ENCODE measurements at regions of chr3 and their contacts with region 1.

Region 1: DNA sequence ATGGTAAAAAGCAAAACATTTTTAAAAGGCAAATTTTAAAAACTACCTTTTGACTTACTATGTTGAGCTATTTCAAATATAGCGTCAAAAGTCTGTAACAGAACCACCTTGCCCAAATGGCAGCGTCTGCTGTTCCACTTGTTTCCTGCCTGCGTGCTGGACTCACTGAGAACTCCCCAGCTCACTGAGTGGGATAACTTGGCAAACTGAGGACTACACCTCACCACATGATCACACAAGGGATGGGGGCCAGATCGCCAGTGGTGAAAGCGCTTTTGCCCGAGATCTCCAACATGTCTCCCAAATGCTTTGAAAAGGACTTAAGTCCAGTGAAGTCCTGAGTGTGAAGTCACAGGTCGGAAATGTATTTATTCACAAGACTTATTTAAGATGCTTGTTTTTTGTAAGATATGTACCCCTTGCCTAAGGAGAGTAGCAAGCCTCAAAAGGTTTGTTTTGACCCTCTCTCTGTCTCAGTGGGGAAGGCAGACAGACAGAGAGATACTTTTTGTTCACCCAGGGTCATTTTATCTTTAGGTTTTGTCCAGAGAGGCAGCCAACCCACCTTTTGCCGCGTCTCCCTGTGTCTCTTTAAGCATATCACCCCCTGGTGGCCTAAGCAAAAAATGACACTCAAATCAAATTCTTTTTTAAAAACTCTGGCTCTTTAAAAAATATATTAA is 192.6 kb downstream of the PDZRN3 start:
- DNase-seq: no peak
- ATAC-seq: peak in 3 of 4 donors; percentile 63 to 74 (median 73)
- H3K4me3 ChIP-seq: no peak overlapping the region
- H3K27ac ChIP-seq: no peak overlapping the region
- H3K4me1 ChIP-seq: no peaks in the 10 kb centered on the region
- H3K27me3 ChIP-seq: no peaks in the 10 kb centered on the region
- CTCF ChIP-seq: peak; percentile 26 to 59 (median 44)

Region 2: GRCh38 chr3:73094951-73095350 is 337.2 kb before region 1 on chr3:
- intact Hi-C with region 1: loop called in 2 of 3 experiments (anchors 5 kb)
- DNase-seq: no peak
- ATAC-seq: no peak
- H3K4me3 ChIP-seq: no peak overlapping the region
- H3K27ac ChIP-seq: no peak overlapping the region
- H3K4me1 ChIP-seq: no peaks in the 10 kb centered on the region
- H3K27me3 ChIP-seq: no peaks in the 10 kb centered on the region
- CTCF ChIP-seq: no peak

Region 3: GRCh38 chr3:73228437-73228836 is 203.7 kb before region 1 on chr3:
- intact Hi-C with region 1: no loop called
- DNase-seq: no peak
- ATAC-seq: no peak
- H3K4me3 ChIP-seq: no peak overlapping the region
- H3K27ac ChIP-seq: no peak overlapping the region
- H3K4me1 ChIP-seq: no peaks in the 10 kb centered on the region
- H3K27me3 ChIP-seq: no peaks in the 10 kb centered on the region
- CTCF ChIP-seq: no peak